ENCODE measurements at regions of chr4 and their contacts with region 1.

Region 1: DNA sequence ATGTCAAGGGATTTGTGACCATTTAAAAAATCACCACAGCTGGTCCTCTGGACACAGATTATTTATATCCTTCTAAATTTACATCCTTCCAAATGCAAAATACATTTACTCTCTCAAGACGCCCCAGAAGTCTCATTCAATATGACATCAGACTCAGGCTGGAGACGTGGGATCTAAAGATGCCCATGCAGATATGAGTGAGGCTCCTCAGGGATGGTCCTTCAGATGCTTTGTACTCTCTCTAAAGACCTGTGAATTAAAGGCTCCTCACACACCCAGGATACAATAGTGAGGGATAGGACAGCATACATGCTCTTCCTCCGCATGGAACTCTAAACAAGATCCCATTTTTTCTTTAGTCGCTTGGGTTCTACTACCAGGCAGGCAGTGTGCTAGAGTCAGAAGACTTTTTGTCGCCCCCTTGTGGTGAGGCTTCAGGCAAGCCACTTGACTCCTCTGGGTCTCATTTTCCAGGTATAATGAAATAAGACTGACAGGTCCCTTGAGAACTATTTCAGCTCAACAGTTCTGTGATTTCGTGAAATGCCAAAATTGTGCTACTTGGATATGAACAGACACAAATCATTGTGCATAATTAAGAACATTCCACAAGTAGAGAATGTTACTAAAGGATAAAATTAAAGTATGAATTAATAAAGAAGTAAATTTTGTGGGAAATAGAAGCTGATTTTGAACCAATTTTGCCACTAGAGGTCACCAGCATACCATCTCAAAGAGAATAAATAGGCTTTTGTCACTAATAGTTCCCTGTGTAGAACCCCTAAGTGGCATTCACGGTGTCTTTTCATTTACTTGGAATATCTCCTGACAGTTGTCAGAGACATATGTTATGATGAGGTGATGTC is 13.7 kb upstream of the SCOC start:
- DNase-seq: peak; percentile 69 to 92 (median 86)
- H3K4me3 ChIP-seq: no peak overlapping the region
- H3K27ac ChIP-seq: no peak overlapping the region
- H3K4me1 ChIP-seq: no peaks in the 10 kb centered on the region
- H3K27me3 ChIP-seq: no peaks in the 10 kb centered on the region
- CTCF ChIP-seq: peak; percentile 63 to 88 (median 72)
- POLR2A ChIP-seq: no peak

Region 2: GRCh38 chr4:140609548-140610425 is 250.0 kb after region 1 on chr4:
- intact Hi-C with region 1: loop called (anchors 5 to 10 kb)
- DNase-seq: peak in 3 of 7 donors; percentile 13 to 27 (median 24)
- H3K4me3 ChIP-seq: no peak overlapping the region
- H3K27ac ChIP-seq: no peak overlapping the region
- H3K4me1 ChIP-seq: no peaks in the 10 kb centered on the region
- H3K27me3 ChIP-seq: no peaks in the 10 kb centered on the region
- CTCF ChIP-seq: peak; percentile 49 to 69 (median 60)
- POLR2A ChIP-seq: no peak

Region 3: GRCh38 chr4:140851032-140851636 is 491.3 kb after region 1 on chr4:
- intact Hi-C with region 1: loop called (anchors 10 kb)
- DNase-seq: peak in 6 of 7 donors; percentile 47 to 66 (median 60)
- H3K4me3 ChIP-seq: no peak overlapping the region
- H3K27ac ChIP-seq: no peak overlapping the region
- H3K4me1 ChIP-seq: no peaks in the 10 kb centered on the region
- H3K27me3 ChIP-seq: peaks cover 6% of the 10 kb centered on the region
- CTCF ChIP-seq: peak; percentile 60 to 92 (median 83)
- POLR2A ChIP-seq: no peak

Measured in adrenal gland (tissue), 19 donors.